ENCODE measurements at regions of chr3 and their contacts with region 1.

Region 1: GRCh38 chr3:183468424-183468823 is 40.0 kb upstream of the MCF2L2 start:
- DNase-seq: no peak
- ATAC-seq: no peak
- H3K4me3 ChIP-seq: no peak overlapping the region
- H3K4me3 Mint-ChIP-seq: no peak overlapping the region
- H3K27ac ChIP-seq: no peak overlapping the region
- H3K27ac Mint-ChIP-seq: no peak overlapping the region
- H3K4me1 ChIP-seq: peaks cover 0 to 6% of the 10 kb centered on the region in 2 experiments
- H3K4me1 Mint-ChIP-seq: peaks cover 0 to 11% (median 8%) of the 10 kb centered on the region in 3 donors
- H3K27me3 ChIP-seq: no peaks in the 10 kb centered on the region
- H3K27me3 Mint-ChIP-seq: no peaks in the 10 kb centered on the region

Region 2: GRCh38 chr3:183265834-183266417 is 202.5 kb before region 1 on chr3:
- CTCF ChIA-PET with region 1: no interaction called
- POLR2A ChIA-PET with region 1: no interaction called
- DNase-seq: no peak
- ATAC-seq: peak in 2 of 4 experiments; percentile 40 to 45
- H3K4me3 ChIP-seq: no peak overlapping the region
- H3K4me3 Mint-ChIP-seq: no peak overlapping the region
- H3K27ac ChIP-seq: no peak overlapping the region
- H3K27ac Mint-ChIP-seq: no peak overlapping the region
- H3K4me1 ChIP-seq: no peaks in the 10 kb centered on the region
- H3K4me1 Mint-ChIP-seq: no peaks in the 10 kb centered on the region
- H3K27me3 ChIP-seq: no peaks in the 10 kb centered on the region
- H3K27me3 Mint-ChIP-seq: peaks cover 2 to 6% of the 10 kb centered on the region in 2 donors

Region 3: DNA sequence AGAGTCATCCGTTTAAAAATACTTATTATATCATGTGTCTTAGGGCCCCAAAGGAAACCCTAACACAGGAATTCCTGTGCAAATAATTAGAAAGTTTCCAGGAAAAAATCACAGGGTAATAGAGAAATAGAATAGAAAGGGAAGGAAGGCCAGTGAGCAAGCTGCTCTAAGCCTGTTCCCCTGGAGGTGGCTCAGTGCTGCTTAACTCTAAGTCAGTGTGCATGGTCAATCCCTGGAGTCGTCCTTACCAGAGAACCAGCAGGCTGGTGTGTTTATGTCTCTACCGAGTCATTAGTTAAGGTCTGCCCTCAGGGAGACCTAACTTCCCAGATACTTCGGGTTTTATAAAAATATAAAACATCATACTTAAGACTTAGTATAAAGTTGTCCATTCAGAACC is 19.0 kb before region 1 on chr3:
- CTCF ChIA-PET with region 1: no interaction called
- POLR2A ChIA-PET with region 1: interaction called in 1 of 2 experiments, 10 read pairs
- DNase-seq: no peak
- ATAC-seq: no peak
- H3K4me3 ChIP-seq: no peak overlapping the region
- H3K4me3 Mint-ChIP-seq: no peak overlapping the region
- H3K27ac ChIP-seq: no peak overlapping the region
- H3K27ac Mint-ChIP-seq: no peak overlapping the region
- H3K4me1 ChIP-seq: peaks cover 0 to 8% of the 10 kb centered on the region in 2 experiments
- H3K4me1 Mint-ChIP-seq: peaks cover 14 to 23% (median 18%) of the 10 kb centered on the region in 3 donors
- H3K27me3 ChIP-seq: no peaks in the 10 kb centered on the region
- H3K27me3 Mint-ChIP-seq: no peaks in the 10 kb centered on the region

Region 4: GRCh38 chr3:183548262-183548769 is 79.9 kb after region 1 on chr3:
- CTCF ChIA-PET with region 1: no interaction called
- POLR2A ChIA-PET with region 1: no interaction called
- DNase-seq: no peak
- ATAC-seq: no peak
- H3K4me3 ChIP-seq: no peak overlapping the region
- H3K4me3 Mint-ChIP-seq: peak overlapping the region in 1 of 3 donors; percentile 30
- H3K27ac ChIP-seq: no peak overlapping the region
- H3K27ac Mint-ChIP-seq: peak overlapping the region in 1 of 2 donors; percentile 58
- H3K4me1 ChIP-seq: peaks cover 11 to 42% of the 10 kb centered on the region in 2 experiments
- H3K4me1 Mint-ChIP-seq: peaks cover 83 to 85% (median 84%) of the 10 kb centered on the region in 3 donors
- H3K27me3 ChIP-seq: no peaks in the 10 kb centered on the region
- H3K27me3 Mint-ChIP-seq: no peaks in the 10 kb centered on the region

Region 5: DNA sequence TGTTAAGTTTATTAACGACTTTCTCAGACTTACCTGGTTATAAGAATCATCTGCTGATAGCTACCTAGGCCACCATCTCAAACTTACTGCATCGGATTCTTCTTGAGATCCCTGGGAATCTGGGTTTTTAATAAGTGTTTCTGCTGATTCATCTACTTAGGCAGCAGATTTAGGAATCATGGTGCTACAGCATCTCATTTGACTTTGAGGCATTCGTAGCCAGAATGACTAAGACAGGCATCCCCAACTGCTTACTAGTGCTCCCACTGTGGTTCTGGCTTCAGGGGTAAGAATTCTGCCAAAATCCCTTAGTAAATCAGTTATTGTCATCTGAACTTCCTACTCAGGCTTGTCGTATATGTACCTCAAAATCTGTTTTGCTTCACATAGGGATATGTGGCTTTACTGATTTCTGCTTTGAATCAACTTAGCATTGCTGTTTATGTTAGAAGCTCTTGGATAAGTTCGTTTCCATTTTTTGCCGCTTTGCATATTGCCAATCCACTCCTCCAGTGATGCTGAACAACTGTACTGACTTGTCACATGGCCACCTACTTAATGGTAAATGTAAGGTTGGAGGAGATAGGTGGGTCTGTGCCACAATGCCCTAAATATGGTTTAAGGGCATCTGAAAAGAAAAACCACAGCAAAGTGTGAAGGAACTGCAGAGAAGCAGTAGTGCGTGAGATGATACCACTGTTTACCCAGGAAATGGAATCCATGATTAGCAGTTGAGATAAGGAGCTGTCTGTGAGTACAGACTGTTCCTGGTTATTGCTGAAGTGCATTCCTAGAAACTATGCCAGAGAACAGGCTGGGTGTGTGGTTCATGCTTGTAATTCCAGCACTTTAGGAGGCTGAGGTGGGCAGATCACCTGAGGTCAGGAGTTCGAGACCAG is 296.7 kb after region 1 on chr3:
- CTCF ChIA-PET with region 1: interaction called, 7 to 13 read pairs
- POLR2A ChIA-PET with region 1: no interaction called
- DNase-seq: peak in 1 of 35 experiments; percentile 17
- ATAC-seq: peak in 1 of 4 experiments; percentile 26
- H3K4me3 ChIP-seq: no peak overlapping the region
- H3K4me3 Mint-ChIP-seq: no peak overlapping the region
- H3K27ac ChIP-seq: no peak overlapping the region
- H3K27ac Mint-ChIP-seq: peak overlapping the region; percentile 48 to 77
- H3K4me1 ChIP-seq: peaks cover 0 to 9% of the 10 kb centered on the region in 2 experiments
- H3K4me1 Mint-ChIP-seq: peaks cover 10 to 17% (median 12%) of the 10 kb centered on the region in 3 donors
- H3K27me3 ChIP-seq: no peaks in the 10 kb centered on the region
- H3K27me3 Mint-ChIP-seq: no peaks in the 10 kb centered on the region

Region 6: DNA sequence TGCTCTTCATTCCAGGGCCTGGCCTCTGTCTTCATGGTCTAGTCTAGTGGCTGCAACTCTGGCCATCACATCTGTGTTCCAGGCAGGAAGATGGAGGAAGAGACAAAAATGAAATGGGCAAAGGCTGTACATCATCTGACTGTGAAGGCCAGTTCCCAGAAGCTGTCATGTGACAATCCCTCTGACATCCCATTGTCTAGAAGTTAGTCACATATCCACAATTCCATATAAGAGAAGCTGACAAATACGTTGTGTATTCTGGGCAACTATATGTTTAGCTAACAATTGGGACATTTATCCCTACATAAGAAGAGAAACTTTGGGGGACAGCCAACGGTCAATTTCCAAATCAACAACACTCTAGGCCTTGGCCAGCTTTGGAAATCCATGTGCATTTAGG is 1719.0 kb after region 1 on chr3:
- CTCF ChIA-PET with region 1: no interaction called
- POLR2A ChIA-PET with region 1: no interaction called
- DNase-seq: no peak
- ATAC-seq: no peak
- H3K4me3 ChIP-seq: no peak overlapping the region
- H3K4me3 Mint-ChIP-seq: no peak overlapping the region
- H3K27ac ChIP-seq: no peak overlapping the region
- H3K27ac Mint-ChIP-seq: no peak overlapping the region
- H3K4me1 ChIP-seq: no peaks in the 10 kb centered on the region
- H3K4me1 Mint-ChIP-seq: no peaks in the 10 kb centered on the region
- H3K27me3 ChIP-seq: no peaks in the 10 kb centered on the region
- H3K27me3 Mint-ChIP-seq: peaks cover 0 to 9% of the 10 kb centered on the region in 2 donors